PC-9 (cell line): ENCODE measurements at regions of chr13 and their contacts with region 1.

Region 1: DNA sequence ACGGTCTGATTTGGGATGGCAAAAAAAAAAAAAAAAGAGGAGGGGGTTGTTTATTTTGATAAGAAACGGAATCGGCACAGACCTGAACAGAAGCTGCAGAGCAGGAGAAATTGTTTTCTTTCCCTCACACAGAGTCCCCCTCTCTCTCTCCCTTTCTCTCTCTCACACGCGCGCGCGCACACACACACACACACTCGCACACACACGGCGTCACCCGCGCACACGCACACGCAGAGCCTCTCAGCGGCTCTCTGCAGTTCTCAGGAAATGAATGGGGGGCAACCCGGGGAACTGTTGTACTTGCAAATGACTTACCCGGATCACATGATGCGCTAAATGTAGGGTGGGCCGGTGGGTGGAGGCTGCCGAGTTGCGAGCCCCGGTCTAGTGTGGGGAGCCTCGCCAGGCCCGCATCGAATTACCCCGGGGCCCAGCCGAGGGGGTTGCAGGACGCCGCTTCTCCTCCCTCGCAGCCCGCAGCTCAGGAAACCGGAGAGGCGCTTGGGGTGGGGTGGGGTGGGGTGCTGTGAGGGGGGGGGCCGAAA is 475 bp downstream of the KLF12 start:
- DNase-seq: peak in 1 of 2 experiments; percentile 61
- H3K4me3 ChIP-seq: peak overlapping the region; percentile 38; the same call in 1 of the 2 replicates
- H3K27ac ChIP-seq: no peak overlapping the region
- H3K4me1 ChIP-seq: 0 out of 2 replicates have a peak, but pooled peaks cover 7% of the 10 kb centered on the region
- H3K27me3 ChIP-seq: peaks cover 17% of the 10 kb centered on the region
- CTCF ChIP-seq: no peak

Region 2: GRCh38 chr13:73835138-73835721 is 298.5 kb before region 1 on chr13:
- CTCF ChIA-PET with region 1: no interaction called
- POLR2A ChIA-PET with region 1: no interaction called
- intact Hi-C with region 1: loop called (anchors 5 kb)
- DNase-seq: no peak
- H3K4me3 ChIP-seq: no peak overlapping the region
- H3K27ac ChIP-seq: no peak overlapping the region
- H3K4me1 ChIP-seq: no peaks in the 10 kb centered on the region
- H3K27me3 ChIP-seq: no peaks in the 10 kb centered on the region
- CTCF ChIP-seq: peak; percentile 79

Region 3: DNA sequence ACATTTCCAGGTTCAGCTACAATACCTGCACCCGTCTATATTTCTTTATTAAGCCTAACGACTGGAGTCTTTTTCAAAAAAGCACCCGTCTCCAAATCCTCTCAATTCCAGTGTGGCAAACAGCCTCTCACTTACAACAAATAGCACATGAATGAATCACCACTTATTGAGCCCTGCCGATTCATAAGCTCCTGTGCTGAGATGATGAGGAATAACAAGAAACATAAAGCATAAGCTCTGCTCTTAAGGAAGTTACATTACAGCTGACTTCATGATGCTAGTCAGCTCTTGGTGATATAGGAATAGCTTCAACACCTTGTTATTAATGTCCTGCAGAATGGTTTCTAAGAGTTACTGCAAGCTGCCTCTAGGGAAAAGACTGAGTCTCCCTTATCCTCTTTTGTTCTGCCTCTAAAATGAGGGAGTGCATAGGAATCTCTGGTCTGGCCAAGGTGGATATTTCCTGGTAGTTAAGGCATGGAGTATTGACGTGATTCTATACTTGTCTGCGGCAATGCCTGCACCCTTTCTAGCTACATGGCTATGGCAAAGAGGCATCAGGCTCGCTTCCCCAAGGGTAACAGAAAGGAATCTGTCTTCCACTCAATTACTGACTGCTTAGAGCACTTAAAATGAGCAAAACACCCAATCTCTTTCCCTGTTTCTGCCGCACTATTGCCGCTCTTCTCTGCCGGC is 195.2 kb before region 1 on chr13:
- CTCF ChIA-PET with region 1: no interaction called
- POLR2A ChIA-PET with region 1: no interaction called
- intact Hi-C with region 1: loop called (anchors 5 kb)
- DNase-seq: peak; percentile 20 to 53
- H3K4me3 ChIP-seq: no peak overlapping the region
- H3K27ac ChIP-seq: no peak overlapping the region
- H3K4me1 ChIP-seq: peaks cover 5% of the 10 kb centered on the region; the same call in 1 of the 2 replicates
- H3K27me3 ChIP-seq: no peaks in the 10 kb centered on the region
- CTCF ChIP-seq: no peak

Region 4: GRCh38 chr13:74036373-74036772 is 97.4 kb before region 1 on chr13:
- CTCF ChIA-PET with region 1: no interaction called
- POLR2A ChIA-PET with region 1: no interaction called
- intact Hi-C with region 1: loop called (anchors 1 kb)
- DNase-seq: peak; percentile 69 to 73
- H3K4me3 ChIP-seq: no peak overlapping the region
- H3K27ac ChIP-seq: no peak overlapping the region
- H3K4me1 ChIP-seq: peaks cover 8% of the 10 kb centered on the region
- H3K27me3 ChIP-seq: no peaks in the 10 kb centered on the region
- CTCF ChIP-seq: no peak

Region 5: DNA sequence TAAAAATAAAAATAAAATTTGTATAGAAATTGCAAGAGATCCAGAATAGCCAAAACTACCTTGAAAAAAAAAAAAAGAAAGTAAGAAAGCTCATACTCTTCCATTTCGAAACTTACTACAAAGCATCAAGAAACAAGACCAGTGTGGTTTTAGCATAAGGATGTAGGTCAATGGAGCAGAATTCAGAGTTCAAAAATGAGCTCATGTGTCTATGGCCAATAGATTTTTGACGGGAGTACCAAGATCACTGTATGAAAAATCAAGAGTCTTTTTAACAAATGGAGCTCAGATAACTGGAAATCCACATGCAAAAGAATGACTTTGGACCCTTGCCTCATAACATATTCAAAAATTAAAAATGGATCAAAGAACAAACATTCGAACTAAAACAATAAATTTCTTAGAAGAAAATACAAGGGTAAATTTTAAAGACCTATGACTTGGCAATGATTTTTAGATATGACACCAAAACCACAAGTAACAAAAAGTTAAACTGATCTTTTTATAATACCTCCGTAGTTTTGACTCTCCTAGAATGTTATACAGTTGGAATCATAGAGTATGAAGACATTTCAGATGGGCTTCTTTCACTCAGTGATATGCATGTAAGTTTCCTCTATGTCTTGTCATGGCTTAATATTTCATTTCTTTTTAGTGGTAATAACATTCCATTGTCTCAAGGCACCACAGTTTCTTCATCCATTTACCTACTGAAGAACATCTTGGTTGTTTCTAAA is 42.7 kb before region 1 on chr13:
- CTCF ChIA-PET with region 1: no interaction called
- POLR2A ChIA-PET with region 1: interaction called, 13 read pairs
- intact Hi-C with region 1: no loop called
- DNase-seq: no peak
- H3K4me3 ChIP-seq: no peak overlapping the region
- H3K27ac ChIP-seq: no peak overlapping the region
- H3K4me1 ChIP-seq: no peaks in the 10 kb centered on the region
- H3K27me3 ChIP-seq: no peaks in the 10 kb centered on the region
- CTCF ChIP-seq: no peak